Heart left ventricle (tissue), 16 donors: ENCODE measurements at regions of chr5 and their contacts with region 1.

Region 1: GRCh38 chr5:57499262-57500050 is 16.8 kb upstream of the ACTBL2 start:
- DNase-seq: peak in 1 of 5 donors; percentile 31
- ATAC-seq: peak in 2 of 4 donors; percentile 59 to 76
- H3K4me3 ChIP-seq: peak overlapping the region in 9 of 12 donors; percentile 4 to 42 (median 26)
- H3K27ac ChIP-seq: peak overlapping the region in 6 of 12 donors; percentile 1 to 48 (median 17)
- H3K4me1 ChIP-seq: peaks cover 0 to 56% (median 23%) of the 10 kb centered on the region in 12 donors
- H3K27me3 ChIP-seq: no peaks in the 10 kb centered on the region
- CTCF ChIP-seq: peak; percentile 59 to 85 (median 78)
- POLR2A ChIP-seq: no peak

Region 2: GRCh38 chr5:56565644-56566043 is 933.8 kb before region 1 on chr5:
- intact Hi-C with region 1: no loop called
- DNase-seq: no peak
- ATAC-seq: peak in 3 of 4 donors; percentile 31 to 60 (median 46)
- H3K4me3 ChIP-seq: no peak overlapping the region
- H3K27ac ChIP-seq: peak overlapping the region in 1 of 12 donors; percentile 39
- H3K4me1 ChIP-seq: peaks cover 0 to 42% (median 4%) of the 10 kb centered on the region in 12 donors
- H3K27me3 ChIP-seq: no peaks in the 10 kb centered on the region
- CTCF ChIP-seq: no peak
- POLR2A ChIP-seq: no peak

Region 3: DNA sequence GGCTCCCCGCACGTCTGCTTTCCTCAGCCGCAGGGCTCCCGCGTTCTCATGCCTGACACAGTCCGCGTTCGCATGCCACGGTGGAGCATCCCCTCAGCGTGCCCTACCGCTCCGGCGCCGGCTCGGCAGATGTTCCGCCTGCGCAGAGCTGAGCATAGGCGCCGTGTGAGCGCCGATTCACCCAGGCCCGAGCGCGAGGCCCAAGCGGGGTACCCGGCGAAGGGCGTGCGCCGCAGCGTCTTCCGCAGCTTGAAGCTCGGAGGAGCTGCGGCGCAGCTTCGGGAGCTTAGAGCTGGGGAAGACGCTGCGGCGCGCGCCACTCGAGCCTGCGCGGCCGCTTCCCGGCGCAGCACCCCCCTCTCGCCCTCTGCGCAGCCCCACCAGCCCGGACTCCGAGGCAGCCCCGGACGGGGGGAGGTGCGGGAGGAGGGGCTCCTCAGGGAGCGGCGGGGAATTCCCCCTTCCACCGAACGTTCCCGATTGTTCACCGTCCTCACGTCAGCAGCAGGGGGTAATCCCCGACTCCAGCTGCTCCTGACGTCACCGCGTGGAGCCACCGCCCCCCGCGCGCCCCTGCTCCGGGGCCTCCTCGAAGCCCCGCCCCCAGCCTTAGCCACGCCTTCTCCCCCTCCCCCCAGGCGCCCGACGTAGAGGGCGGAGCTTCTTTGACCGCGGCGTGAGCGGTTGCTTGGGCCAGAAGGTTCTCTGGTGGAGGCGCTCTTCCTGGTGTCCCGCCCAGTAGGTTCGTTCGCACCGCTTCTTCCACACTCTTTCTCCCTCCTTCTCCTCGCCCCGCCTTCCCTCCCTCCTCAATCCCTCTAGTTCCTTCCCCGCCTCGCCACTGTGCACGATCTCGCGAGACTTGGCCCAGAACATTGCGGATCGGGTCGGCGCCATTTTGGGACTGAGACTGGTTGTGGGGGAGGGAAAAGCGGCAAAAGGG is 326.0 kb before region 1 on chr5 and contains the start of gene GPBP1:
- intact Hi-C with region 1: no loop called
- DNase-seq: peak; percentile 99
- ATAC-seq: peak; percentile 91 to 95 (median 94)
- H3K4me3 ChIP-seq: peak within 1 kb of the TSS; percentile 71 to 98 (median 89)
- H3K27ac ChIP-seq: peak within 1 kb of the TSS; percentile 94 to 100 (median 99)
- H3K4me1 ChIP-seq: peaks cover 8 to 45% (median 26%) of the 10 kb centered on the region in 12 donors
- H3K27me3 ChIP-seq: no peaks in the 10 kb centered on the region
- CTCF ChIP-seq: peak in 1 of 12 donors; percentile 3
- POLR2A ChIP-seq: peak in 1 of 2 donors; percentile 45
- total RNA-seq, gene GPBP1: 41.8 to 60.9 (median 50.1) TPM

Region 4: DNA sequence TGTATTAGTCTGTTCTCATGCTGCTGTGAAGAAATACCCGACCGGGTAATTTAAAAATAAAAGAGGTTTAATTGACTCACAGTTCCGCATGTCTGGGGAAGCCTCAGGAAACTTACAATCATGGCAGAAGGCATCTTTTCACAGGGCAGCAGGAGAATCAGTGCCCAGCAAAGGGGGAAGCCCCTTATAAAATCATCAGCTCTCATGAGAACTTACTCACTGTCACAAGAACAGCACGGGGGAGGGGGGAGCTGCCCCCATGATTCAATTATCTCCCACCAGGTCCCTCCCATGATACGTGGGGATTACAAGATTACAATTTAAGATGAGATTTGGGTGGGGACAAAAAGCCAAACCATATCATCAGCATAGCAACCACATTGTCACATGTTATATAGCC is 223.1 kb before region 1 on chr5:
- intact Hi-C with region 1: no loop called
- DNase-seq: no peak
- ATAC-seq: no peak
- H3K4me3 ChIP-seq: no peak overlapping the region
- H3K27ac ChIP-seq: no peak overlapping the region
- H3K4me1 ChIP-seq: no peaks in the 10 kb centered on the region
- H3K27me3 ChIP-seq: no peaks in the 10 kb centered on the region
- CTCF ChIP-seq: no peak
- POLR2A ChIP-seq: no peak

Region 5: DNA sequence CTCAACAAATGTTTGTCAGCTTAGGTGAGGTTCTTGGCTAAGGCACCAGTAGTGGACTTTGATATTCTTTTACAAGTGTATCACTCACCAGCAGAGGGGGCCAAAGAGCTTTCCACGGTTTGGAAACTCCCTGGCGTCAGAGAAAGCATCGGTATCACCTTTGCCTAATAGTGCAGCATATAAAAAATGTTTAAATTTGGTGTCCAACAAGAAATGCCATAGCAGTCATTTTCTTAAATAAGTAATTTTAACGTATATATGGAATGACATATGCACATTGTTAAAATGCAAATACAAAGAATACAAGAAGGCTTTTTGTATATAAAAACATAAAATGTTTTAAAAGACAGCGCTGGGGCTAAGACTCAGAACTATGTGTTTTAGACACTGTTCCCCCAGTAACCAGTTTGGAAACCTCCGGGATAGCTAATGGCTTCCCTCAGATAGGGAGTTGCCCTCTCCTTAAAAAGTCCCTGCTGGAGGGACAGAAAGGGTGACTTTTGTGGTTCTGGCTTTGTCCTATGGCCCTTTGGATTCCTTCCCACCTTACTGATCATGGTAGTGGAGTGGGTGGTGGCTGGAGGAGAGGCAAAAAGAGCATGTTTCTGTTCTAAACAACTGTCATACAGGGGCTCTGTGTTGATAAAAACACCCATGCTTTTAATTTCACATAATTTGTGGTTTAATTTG is 201.0 kb before region 1 on chr5:
- intact Hi-C with region 1: loop called (anchors 2 to 5 kb)
- DNase-seq: peak in 4 of 5 donors; percentile 78 to 86 (median 85)
- ATAC-seq: peak; percentile 82 to 95 (median 89)
- H3K4me3 ChIP-seq: peak overlapping the region in 8 of 12 donors; percentile 0 to 44 (median 26)
- H3K27ac ChIP-seq: peak overlapping the region in 5 of 12 donors; percentile 18 to 62 (median 37)
- H3K4me1 ChIP-seq: peaks cover 0 to 15% (median 8%) of the 10 kb centered on the region in 12 donors
- H3K27me3 ChIP-seq: no peaks in the 10 kb centered on the region
- CTCF ChIP-seq: peak; percentile 72 to 92 (median 82)
- POLR2A ChIP-seq: no peak

Region 6: DNA sequence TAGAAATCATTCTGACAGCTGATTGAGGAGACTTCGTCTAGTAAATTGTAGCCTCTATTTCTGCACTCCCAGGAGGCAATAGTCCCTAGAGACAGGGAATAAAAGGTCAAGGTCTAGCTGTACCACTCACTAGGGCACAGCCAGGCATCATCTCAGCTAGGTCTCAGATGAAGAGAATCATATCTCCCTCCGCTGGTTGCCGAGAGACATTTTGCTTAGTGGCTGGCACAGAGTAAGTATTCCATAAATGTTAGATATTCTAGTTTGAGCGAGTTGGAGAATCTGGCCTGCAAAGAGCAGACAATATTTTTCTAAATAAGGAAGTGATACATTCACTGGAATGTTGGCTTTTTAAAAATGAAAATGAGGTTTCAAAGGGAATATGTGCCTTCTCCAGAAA is 163.5 kb after region 1 on chr5:
- intact Hi-C with region 1: loop called in 5 of 10 experiments (anchors 5 to 10 kb)
- DNase-seq: peak in 3 of 5 donors; percentile 32 to 60 (median 43)
- ATAC-seq: peak; percentile 81 to 94 (median 92)
- H3K4me3 ChIP-seq: no peak overlapping the region
- H3K27ac ChIP-seq: peak overlapping the region; percentile 6 to 85 (median 64)
- H3K4me1 ChIP-seq: peaks cover 0 to 27% (median 5%) of the 10 kb centered on the region in 12 donors
- H3K27me3 ChIP-seq: no peaks in the 10 kb centered on the region
- CTCF ChIP-seq: peak in 3 of 12 donors; percentile 7 to 34 (median 25)
- POLR2A ChIP-seq: no peak

Region 7: GRCh38 chr5:57698769-57699168 is 199.3 kb after region 1 on chr5:
- intact Hi-C with region 1: loop called in 2 of 10 experiments (anchors 5 to 10 kb)
- DNase-seq: no peak
- ATAC-seq: no peak
- H3K4me3 ChIP-seq: no peak overlapping the region
- H3K27ac ChIP-seq: peak overlapping the region in 11 of 12 donors; percentile 19 to 88 (median 76)
- H3K4me1 ChIP-seq: peaks cover 2 to 55% (median 30%) of the 10 kb centered on the region in 12 donors
- H3K27me3 ChIP-seq: no peaks in the 10 kb centered on the region
- CTCF ChIP-seq: no peak
- POLR2A ChIP-seq: no peak

Region 8: GRCh38 chr5:57779383-57780223 is 280.1 kb after region 1 on chr5:
- intact Hi-C with region 1: loop called (anchors 1 to 10 kb)
- DNase-seq: peak in 2 of 5 donors; percentile 41 to 43
- ATAC-seq: peak; percentile 78 to 88 (median 84)
- H3K4me3 ChIP-seq: peak overlapping the region in 3 of 12 donors; percentile 1 to 8 (median 7)
- H3K27ac ChIP-seq: peak overlapping the region in 11 of 12 donors; percentile 2 to 73 (median 50)
- H3K4me1 ChIP-seq: peaks cover 5 to 40% (median 17%) of the 10 kb centered on the region in 12 donors
- H3K27me3 ChIP-seq: no peaks in the 10 kb centered on the region
- CTCF ChIP-seq: peak; percentile 46 to 82 (median 71)
- POLR2A ChIP-seq: no peak

Region 9: GRCh38 chr5:58071566-58071965 is 572.1 kb after region 1 on chr5:
- intact Hi-C with region 1: no loop called
- DNase-seq: peak; percentile 54 to 86 (median 79)
- ATAC-seq: peak; percentile 94 to 98 (median 97)
- H3K4me3 ChIP-seq: no peak overlapping the region
- H3K27ac ChIP-seq: peak overlapping the region; percentile 3 to 85 (median 78)
- H3K4me1 ChIP-seq: peaks cover 6 to 60% (median 46%) of the 10 kb centered on the region in 12 donors
- H3K27me3 ChIP-seq: no peaks in the 10 kb centered on the region
- CTCF ChIP-seq: no peak
- POLR2A ChIP-seq: no peak